ENCODE measurements at regions of chr11 and their contacts with region 1.

Region 1: GRCh38 chr11:106961518-106961917 is 56.8 kb downstream of the GUCY1A2 start:
- DNase-seq: no peak
- ATAC-seq: no peak
- H3K4me3 Mint-ChIP-seq: no peak overlapping the region
- H3K27ac Mint-ChIP-seq: no peak overlapping the region
- H3K4me1 Mint-ChIP-seq: no peaks in the 10 kb centered on the region
- H3K27me3 Mint-ChIP-seq: no peaks in the 10 kb centered on the region

Region 2: GRCh38 chr11:107221748-107222285 is 260.3 kb after region 1 on chr11:
- CTCF ChIA-PET with region 1: no interaction called
- POLR2A ChIA-PET with region 1: no interaction called
- intact Hi-C with region 1: no loop called
- DNase-seq: no peak
- ATAC-seq: no peak
- H3K4me3 Mint-ChIP-seq: no peak overlapping the region
- H3K27ac Mint-ChIP-seq: no peak overlapping the region
- H3K4me1 Mint-ChIP-seq: no peaks in the 10 kb centered on the region
- H3K27me3 Mint-ChIP-seq: peaks cover 3% of the 10 kb centered on the region

Region 3: DNA sequence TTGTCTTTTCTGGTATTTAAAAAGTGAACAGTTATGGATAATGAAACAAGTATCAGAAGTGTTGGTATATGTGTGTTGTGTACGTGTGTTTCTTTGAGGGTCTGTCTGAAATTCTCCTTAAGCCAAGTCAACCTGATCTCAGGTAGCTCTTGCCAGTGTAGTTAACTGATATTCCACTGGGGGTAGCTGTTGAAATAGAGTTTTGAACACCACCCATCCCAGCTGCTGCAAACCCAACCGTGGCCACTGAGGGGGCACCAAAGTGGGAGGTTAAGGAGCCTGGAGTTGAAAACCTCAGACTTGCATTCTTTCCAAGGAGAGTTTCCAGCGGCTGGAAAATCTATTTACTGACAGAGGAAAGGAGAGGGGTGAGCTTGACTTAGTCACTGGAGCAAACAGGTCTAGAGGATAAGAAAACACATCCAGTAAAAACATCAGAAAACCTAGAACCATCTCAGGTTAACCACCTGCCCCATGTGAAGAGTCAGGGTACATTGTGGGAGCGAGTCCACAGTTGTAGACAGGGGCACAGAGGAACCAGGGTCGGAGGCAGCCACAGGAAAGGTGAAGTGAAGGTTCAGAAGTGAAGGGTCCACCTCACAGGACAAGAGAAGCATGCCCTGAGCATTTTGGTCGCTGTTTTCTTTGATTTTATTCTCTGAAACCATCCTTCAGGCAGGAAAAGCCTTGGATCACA is 1038.4 kb after region 1 on chr11:
- CTCF ChIA-PET with region 1: no interaction called
- POLR2A ChIA-PET with region 1: interaction called, 11 read pairs
- intact Hi-C with region 1: no loop called
- DNase-seq: peak; percentile 58
- ATAC-seq: peak; percentile 85
- H3K4me3 Mint-ChIP-seq: no peak overlapping the region
- H3K27ac Mint-ChIP-seq: no peak overlapping the region
- H3K4me1 Mint-ChIP-seq: no peaks in the 10 kb centered on the region
- H3K27me3 Mint-ChIP-seq: peaks cover 2% of the 10 kb centered on the region